ENCODE measurements at regions of chr6 and their contacts with region 1.

Region 1: GRCh38 chr6:2876210-2877056 is 26.7 kb downstream of the SERPINB9 start:
- DNase-seq: no peak
- ATAC-seq: peak; percentile 23
- H3K4me3 Mint-ChIP-seq: peak overlapping the region; percentile 88
- H3K27ac Mint-ChIP-seq: peak overlapping the region; percentile 99
- H3K4me1 Mint-ChIP-seq: peaks cover 85% of the 10 kb centered on the region
- H3K27me3 Mint-ChIP-seq: no peaks in the 10 kb centered on the region
- CTCF ChIP-seq: no peak

Region 2: GRCh38 chr6:2891768-2892170 is 15.3 kb after region 1 on chr6:
- CTCF ChIA-PET with region 1: no interaction called
- POLR2A ChIA-PET with region 1: interaction called, 10 read pairs
- intact Hi-C with region 1: loop called (anchors 1 kb)
- DNase-seq: peak; percentile 58
- ATAC-seq: peak; percentile 84
- H3K4me3 Mint-ChIP-seq: peak overlapping the region; percentile 58
- H3K27ac Mint-ChIP-seq: peak overlapping the region; percentile 87
- H3K4me1 Mint-ChIP-seq: peaks cover 71% of the 10 kb centered on the region
- H3K27me3 Mint-ChIP-seq: no peaks in the 10 kb centered on the region
- CTCF ChIP-seq: no peak

Region 3: DNA sequence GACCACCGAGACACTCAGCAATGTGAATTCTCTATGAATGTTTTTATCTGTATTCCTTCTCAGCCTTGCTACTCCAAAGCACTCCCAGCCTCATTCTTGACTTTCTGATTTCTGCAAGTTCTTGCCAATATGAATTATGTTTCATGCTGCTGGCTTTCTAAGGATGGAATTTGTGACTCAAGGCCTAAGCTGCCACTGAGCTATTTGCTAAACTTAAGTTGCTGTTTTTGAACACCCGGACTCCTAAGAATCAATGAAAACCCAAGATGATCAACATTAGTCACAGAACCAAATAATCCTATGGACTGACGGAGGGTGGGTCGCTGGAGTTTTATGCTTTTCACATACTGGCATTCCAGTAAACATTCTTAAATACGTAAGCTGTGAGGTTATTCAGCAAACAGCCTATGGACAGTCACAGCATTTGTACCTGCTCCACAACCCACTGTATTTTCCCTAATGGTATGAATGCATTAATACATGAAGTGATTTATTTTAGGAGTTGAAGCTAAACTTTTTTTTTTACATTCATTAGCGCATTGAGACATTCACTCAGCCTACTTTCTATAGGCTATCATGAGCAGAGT is 883.3 kb after region 1 on chr6:
- CTCF ChIA-PET with region 1: no interaction called
- POLR2A ChIA-PET with region 1: no interaction called
- intact Hi-C with region 1: no loop called
- DNase-seq: no peak
- ATAC-seq: no peak
- H3K4me3 Mint-ChIP-seq: no peak overlapping the region
- H3K27ac Mint-ChIP-seq: no peak overlapping the region
- H3K4me1 Mint-ChIP-seq: peaks cover 21% of the 10 kb centered on the region
- H3K27me3 Mint-ChIP-seq: no peaks in the 10 kb centered on the region
- CTCF ChIP-seq: no peak

Measured in activated B cell treated with CpG ODN at 0.5 μM for 24 hours (primary cell).